ENCODE measurements at regions of chr10 and their contacts with region 1.

Region 1: DNA sequence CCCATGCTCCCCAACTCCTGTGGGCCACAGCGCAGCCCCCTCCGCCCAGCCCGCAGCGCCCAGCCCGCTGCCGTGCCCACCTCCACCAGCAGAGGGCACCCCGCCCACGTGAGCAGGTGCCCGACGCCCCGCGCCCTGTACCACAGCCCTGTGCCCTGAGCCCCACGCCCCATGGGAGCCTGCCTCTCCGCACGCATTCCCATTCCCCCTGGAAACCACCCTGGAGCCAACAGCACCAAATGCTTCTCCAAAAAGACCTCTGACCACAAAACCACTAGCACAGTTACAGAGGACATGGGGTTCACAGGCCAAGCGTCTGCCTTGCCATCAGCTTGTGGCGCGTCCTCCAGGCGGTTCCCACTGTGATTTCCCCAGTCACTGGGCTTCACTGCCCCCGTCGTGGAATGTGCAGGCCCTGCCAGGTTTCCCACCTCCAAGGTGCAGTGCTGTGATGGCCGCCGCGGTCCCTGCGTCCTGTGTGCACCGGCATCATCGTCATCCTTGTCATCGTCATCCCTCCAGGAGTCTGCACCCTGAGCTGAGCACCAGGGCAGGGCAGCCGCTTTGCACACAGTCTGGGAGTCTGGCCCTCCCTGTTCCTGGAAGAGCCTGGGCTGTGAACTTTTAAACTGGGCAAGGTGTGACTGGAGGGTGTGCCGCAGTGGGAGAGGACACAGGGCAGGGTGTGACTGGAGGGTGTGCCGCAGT is 61.7 kb downstream of the PWWP2B start:
- DNase-seq: peak; percentile 63
- H3K27ac ChIP-seq: no peak overlapping the region
- CTCF ChIP-seq: peak; percentile 95

Region 2: DNA sequence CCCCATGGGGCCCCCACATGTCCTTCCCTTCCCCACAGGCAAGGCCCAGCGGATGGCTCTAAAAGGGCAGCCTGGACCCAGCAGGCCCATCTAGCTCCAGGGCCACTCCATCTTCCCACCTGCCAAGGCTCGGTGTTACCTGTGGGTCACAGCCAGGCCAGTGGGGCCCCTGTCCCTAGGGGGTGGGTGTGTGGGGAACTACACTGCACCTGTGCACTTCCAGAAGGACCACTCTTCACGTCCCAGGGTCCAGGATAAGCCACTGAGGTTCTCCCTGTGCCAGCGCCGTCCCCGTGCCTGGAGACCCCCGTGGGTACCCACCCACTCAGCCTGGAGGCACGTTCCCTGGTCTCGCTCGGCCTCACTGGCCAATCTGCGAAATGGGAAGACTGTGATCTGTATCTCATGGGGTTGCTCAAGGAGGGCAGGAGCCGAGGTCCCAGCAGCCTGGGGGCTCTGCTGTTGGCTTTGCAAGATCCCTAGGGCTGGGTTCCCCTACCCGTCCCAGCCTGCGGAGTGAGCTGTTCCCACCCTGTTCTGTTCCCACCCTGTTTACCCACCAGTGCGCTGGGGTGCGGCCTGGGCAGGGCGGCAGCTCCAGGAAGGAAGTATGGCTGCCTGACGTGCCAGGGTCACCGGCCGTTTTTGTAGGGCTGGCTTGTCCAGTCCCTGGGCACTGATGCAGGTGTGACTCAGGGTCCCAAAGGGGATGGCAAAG is 57.2 kb before region 1 on chr10:
- CTCF ChIA-PET with region 1: no interaction called
- POLR2A ChIA-PET with region 1: no interaction called
- DNase-seq: no peak
- H3K27ac ChIP-seq: 0 out of 2 replicates have a peak overlapping the region, but pooled peaks have one; percentile 81
- CTCF ChIP-seq: no peak

Region 3: GRCh38 chr10:132636358-132636757 is 177.6 kb after region 1 on chr10:
- CTCF ChIA-PET with region 1: interaction called, 13 read pairs
- POLR2A ChIA-PET with region 1: no interaction called
- DNase-seq: no peak
- H3K27ac ChIP-seq: no peak overlapping the region
- CTCF ChIP-seq: no peak

Measured in RWPE1 (cell line).